ENCODE measurements at regions of chr20 and their contacts with region 1.

Region 1: GRCh38 chr20:35994994-35995453 is 26.6 kb downstream of the CNBD2 start:
- DNase-seq: peak; percentile 66 to 90 (median 83)
- ATAC-seq: peak; percentile 89
- H3K4me3 ChIP-seq: no peak overlapping the region
- H3K4me3 Mint-ChIP-seq: no peak overlapping the region
- H3K27ac ChIP-seq: no peak overlapping the region
- H3K27ac Mint-ChIP-seq: no peak overlapping the region
- H3K4me1 ChIP-seq: no peaks in the 10 kb centered on the region
- H3K4me1 Mint-ChIP-seq: peaks cover 8% of the 10 kb centered on the region
- H3K27me3 ChIP-seq: no peaks in the 10 kb centered on the region
- H3K27me3 Mint-ChIP-seq: peaks cover 4% of the 10 kb centered on the region
- CTCF ChIP-seq: peak; percentile 84

Region 2: DNA sequence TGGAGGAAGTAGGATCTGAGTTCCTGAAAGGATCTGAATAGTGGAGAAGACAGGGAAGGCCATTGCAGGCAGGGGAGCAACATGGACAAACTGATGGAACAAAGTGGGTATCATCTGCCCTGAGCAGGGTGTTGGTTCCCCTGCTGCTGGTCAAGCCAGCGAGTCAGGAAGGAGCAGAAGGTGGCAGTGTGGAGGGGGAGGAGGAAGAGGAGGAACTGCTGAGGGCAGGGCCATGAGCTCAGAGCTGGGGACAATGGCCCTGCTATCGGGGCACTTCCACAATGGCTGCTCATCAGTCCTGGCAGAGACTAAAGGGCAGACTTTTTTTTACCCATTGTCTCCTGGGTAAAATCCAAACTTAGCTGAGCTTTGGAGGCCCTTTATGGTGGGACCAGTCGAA is 13.1 kb before region 1 on chr20:
- CTCF ChIA-PET with region 1: interaction called, 11 read pairs
- POLR2A ChIA-PET with region 1: no interaction called
- intact Hi-C with region 1: no loop called
- DNase-seq: no peak
- ATAC-seq: no peak
- H3K4me3 ChIP-seq: no peak overlapping the region
- H3K4me3 Mint-ChIP-seq: no peak overlapping the region
- H3K27ac ChIP-seq: no peak overlapping the region
- H3K27ac Mint-ChIP-seq: no peak overlapping the region
- H3K4me1 ChIP-seq: no peaks in the 10 kb centered on the region
- H3K4me1 Mint-ChIP-seq: no peaks in the 10 kb centered on the region
- H3K27me3 ChIP-seq: no peaks in the 10 kb centered on the region
- H3K27me3 Mint-ChIP-seq: peaks cover 3% of the 10 kb centered on the region
- CTCF ChIP-seq: no peak

Region 3: GRCh38 chr20:36093025-36093803 is 98.2 kb after region 1 on chr20:
- CTCF ChIA-PET with region 1: interaction called, 10 read pairs
- POLR2A ChIA-PET with region 1: no interaction called
- intact Hi-C with region 1: no loop called
- DNase-seq: peak in 7 of 9 experiments; percentile 5 to 60 (median 48)
- ATAC-seq: peak; percentile 53
- H3K4me3 ChIP-seq: peak overlapping the region; percentile 45 to 69
- H3K4me3 Mint-ChIP-seq: peak overlapping the region; percentile 90
- H3K27ac ChIP-seq: no peak overlapping the region
- H3K27ac Mint-ChIP-seq: peak overlapping the region; percentile 18
- H3K4me1 ChIP-seq: peaks cover 9% of the 10 kb centered on the region
- H3K4me1 Mint-ChIP-seq: peaks cover 15% of the 10 kb centered on the region
- H3K27me3 ChIP-seq: peaks cover 8 to 21% of the 10 kb centered on the region in 2 experiments
- H3K27me3 Mint-ChIP-seq: peaks cover 36% of the 10 kb centered on the region
- CTCF ChIP-seq: no peak

Region 4: DNA sequence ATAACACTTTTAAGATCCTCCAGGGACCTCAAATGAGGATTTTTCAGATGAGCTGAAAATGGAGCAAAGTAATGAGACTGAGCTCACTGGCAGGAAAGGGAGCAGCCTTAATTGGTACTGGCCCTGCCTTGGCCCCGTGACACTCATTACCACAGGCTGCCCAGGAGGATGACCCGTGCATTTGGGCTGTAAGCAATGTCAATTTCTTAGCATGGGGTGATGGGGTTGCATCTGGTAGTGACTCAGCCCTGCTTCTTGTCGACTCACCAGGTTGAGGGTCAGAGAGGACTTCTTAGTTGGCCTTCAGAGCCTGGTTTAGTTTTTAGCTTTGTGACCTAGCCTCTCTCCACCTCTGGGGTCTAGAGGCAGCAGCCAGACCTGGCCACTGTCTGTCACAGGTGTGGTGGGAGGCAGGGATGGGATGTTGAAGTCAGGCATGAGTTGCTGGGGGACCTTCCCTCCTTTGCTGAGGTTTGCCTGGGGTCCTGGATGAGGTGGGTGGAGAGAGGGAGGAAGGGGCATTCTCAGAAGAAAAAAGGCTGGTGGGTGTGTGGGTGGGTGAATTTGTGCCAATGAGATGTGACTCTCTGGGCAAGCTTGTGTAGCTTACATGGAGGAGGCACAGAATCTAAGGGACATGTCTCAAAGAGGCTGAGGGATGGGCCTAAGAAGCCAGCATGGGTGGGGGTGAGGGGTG is 133.6 kb after region 1 on chr20:
- CTCF ChIA-PET with region 1: interaction called, 576 read pairs
- POLR2A ChIA-PET with region 1: no interaction called
- intact Hi-C with region 1: no loop called
- DNase-seq: no peak
- ATAC-seq: no peak
- H3K4me3 ChIP-seq: no peak overlapping the region
- H3K4me3 Mint-ChIP-seq: no peak overlapping the region
- H3K27ac ChIP-seq: no peak overlapping the region
- H3K27ac Mint-ChIP-seq: no peak overlapping the region
- H3K4me1 ChIP-seq: no peaks in the 10 kb centered on the region
- H3K4me1 Mint-ChIP-seq: no peaks in the 10 kb centered on the region
- H3K27me3 ChIP-seq: no peaks in the 10 kb centered on the region
- H3K27me3 Mint-ChIP-seq: no peaks in the 10 kb centered on the region
- CTCF ChIP-seq: no peak

Region 5: DNA sequence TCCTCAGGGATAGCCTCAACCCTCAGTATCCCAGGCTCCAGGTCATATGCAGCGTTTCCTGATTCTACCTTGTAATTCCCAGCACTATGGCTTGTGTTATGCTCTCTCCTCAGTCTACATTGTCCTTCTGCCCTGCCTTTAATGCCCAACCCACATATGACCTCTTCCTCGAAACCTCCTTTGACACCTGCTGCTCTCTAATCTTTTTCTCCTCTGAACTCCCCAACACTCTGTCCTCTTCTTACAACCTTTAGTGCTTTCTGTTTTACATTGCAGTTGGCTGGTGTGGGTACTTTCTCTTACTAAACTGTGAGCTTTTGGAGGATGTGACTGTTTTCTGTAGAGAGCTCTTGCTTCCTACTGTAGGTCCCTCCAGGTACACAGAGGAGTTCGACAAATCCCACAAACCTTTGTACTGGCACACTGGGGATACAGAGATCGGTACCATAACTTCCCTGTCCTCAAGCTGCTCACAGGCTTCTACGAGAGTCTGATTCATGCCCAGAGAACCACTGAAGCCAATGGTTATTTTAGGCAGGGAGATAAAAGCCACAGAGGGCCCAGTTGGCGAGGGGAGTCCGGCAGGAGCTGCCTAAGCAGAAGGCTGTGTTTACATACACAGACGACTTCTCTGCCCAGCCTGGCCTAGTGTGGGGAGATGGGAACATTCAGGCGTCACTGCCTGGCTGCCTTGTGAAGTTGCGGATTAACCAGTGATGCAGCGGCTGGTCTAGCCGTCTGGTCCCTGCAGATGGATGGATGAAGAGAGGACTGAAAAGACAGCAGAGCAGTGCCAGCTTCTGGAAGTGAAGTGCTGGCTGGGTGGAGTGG is 151.1 kb after region 1 on chr20:
- CTCF ChIA-PET with region 1: interaction called, 576 read pairs
- POLR2A ChIA-PET with region 1: no interaction called
- intact Hi-C with region 1: no loop called
- DNase-seq: no peak
- ATAC-seq: no peak
- H3K4me3 ChIP-seq: no peak overlapping the region
- H3K4me3 Mint-ChIP-seq: no peak overlapping the region
- H3K27ac ChIP-seq: no peak overlapping the region
- H3K27ac Mint-ChIP-seq: no peak overlapping the region
- H3K4me1 ChIP-seq: no peaks in the 10 kb centered on the region
- H3K4me1 Mint-ChIP-seq: no peaks in the 10 kb centered on the region
- H3K27me3 ChIP-seq: no peaks in the 10 kb centered on the region
- H3K27me3 Mint-ChIP-seq: peaks cover 18% of the 10 kb centered on the region
- CTCF ChIP-seq: no peak

Region 6: DNA sequence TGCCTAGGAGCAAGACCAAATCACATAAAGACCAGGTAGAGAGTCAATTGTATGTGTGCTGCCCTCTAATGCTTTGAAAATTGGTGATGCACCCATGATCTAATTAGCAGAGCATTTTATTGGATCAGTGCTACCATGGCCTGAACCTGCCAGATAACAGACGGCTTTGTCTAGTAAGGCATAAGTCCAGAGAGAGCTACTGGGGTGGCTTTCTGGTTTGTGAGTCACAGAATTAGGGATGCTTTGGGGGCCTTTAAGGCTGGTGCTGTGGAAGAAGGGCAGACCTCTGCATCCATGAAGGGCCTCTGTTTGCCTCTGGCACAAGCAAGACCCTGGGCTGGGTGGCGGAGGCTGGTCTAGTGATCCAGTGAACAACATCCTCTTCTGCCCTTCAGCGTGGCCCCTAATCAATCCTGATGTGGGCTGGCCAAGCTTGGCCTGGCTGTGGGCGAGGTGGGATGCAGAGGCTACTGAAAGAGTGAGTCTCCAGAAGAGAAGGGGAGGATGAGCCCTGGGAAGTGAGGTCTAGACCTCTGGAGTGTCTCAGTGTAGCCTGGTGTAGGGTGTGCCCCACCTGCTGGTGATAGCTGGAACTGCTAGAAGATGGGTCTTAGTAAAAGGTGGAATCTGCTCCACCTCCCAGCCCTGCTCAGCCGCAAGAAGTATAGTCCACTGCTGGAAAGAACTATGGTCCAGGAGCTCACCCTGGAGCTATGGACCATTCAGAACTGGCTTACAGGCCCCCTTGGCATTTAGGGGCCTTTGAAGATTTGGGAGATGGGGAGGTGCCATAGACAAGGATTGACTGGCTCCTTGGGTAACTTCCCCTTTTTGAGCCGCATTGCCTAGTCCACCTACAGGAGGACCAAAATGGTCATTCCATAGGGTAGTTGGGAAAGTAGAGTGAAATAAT is 204.6 kb after region 1 on chr20:
- CTCF ChIA-PET with region 1: interaction called, 15 read pairs
- POLR2A ChIA-PET with region 1: no interaction called
- intact Hi-C with region 1: loop called (anchors 1 kb)
- DNase-seq: peak; percentile 53 to 79 (median 74)
- ATAC-seq: peak; percentile 82
- H3K4me3 ChIP-seq: no peak overlapping the region
- H3K4me3 Mint-ChIP-seq: no peak overlapping the region
- H3K27ac ChIP-seq: no peak overlapping the region
- H3K27ac Mint-ChIP-seq: no peak overlapping the region
- H3K4me1 ChIP-seq: no peaks in the 10 kb centered on the region
- H3K4me1 Mint-ChIP-seq: peaks cover 8% of the 10 kb centered on the region
- H3K27me3 ChIP-seq: no peaks in the 10 kb centered on the region
- H3K27me3 Mint-ChIP-seq: peaks cover 7% of the 10 kb centered on the region
- CTCF ChIP-seq: peak; percentile 82

Region 7: DNA sequence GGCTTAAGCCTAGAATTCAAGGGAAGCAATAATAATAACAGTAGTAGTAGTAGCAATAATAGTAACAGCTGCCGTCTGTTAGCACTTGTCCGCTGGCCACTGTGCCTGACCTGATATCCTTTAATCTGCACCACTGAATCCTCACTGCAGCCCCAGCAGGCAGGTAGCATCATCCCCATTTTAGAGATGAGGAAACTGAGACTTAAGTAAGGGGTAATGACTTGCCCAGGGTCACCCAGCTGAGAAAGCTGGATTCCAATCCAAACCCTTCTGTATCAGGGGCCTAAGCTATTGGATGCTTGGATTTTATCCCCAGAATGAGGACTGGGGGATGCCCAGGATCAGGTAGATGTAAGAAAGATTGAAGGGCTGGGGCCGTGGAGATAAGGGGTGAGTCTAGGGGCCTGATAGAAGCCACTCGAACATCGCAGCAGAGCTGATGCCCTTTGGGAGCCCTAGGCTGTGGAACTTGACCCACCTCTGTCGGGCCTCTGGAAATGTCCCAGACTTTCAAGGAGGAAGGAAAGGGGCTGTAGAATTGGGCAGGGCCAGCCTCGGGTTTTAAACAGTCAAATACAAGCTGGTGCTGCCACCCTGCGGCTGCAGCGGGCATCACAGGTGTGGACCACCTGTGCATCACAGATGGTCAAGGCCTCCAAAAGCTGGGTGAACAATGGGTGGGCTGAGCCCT is 444.2 kb after region 1 on chr20:
- CTCF ChIA-PET with region 1: interaction called, 3 read pairs
- POLR2A ChIA-PET with region 1: no interaction called
- intact Hi-C with region 1: loop called (anchors 1 to 10 kb)
- DNase-seq: peak; percentile 29 to 78 (median 65)
- ATAC-seq: peak; percentile 49
- H3K4me3 ChIP-seq: no peak overlapping the region
- H3K4me3 Mint-ChIP-seq: no peak overlapping the region
- H3K27ac ChIP-seq: no peak overlapping the region
- H3K27ac Mint-ChIP-seq: no peak overlapping the region
- H3K4me1 ChIP-seq: no peaks in the 10 kb centered on the region
- H3K4me1 Mint-ChIP-seq: peaks cover 2% of the 10 kb centered on the region
- H3K27me3 ChIP-seq: no peaks in the 10 kb centered on the region
- H3K27me3 Mint-ChIP-seq: peaks cover 6% of the 10 kb centered on the region
- CTCF ChIP-seq: peak; percentile 81